Calu3 (cell line): ENCODE measurements at regions of chr17 and their contacts with region 1.

Region 1: DNA sequence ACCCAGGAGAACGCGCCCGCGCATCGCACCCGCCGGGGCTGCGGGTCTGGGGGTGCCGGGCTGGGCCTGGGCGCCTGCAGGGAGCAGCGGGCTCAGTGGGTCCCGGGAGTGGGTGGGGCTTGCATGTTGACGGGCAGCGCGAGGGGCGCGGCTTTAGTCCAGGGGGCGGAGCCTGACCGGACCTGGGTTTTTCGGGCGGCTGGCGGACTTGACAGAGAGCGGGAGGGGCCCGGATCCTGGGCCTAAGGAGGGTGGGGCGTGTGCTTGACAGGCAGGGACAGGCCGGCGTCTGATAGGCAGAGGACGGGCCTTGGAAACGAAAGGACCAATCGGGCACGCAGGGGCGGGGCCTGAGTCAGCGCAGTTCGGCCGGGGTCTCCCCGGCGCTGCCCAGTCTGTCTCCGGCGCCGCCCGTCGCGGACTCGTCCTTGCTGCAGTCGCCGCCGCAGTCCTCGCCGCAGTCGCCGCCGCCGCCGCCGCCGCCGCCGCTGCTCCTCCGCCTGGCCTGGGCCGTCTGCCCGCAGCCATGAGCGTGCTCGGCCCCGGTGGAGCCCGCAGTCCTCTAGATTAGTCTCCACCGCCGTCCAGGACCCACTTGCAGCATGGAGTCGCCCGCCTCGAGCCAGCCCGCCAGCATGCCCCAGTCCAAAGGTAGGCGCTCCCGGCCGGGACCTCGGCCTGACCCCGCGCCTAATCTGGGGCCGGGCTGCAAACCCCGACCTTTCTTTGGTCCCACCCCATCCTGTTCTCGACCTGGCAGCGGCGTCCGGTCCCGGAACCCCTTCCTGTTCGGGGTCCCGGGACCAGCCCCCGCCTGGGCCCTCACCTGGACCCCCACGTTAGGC is at the start of gene MAP2K3:
- DNase-seq: peak; percentile 96
- H3K4me3 Mint-ChIP-seq: peak within 1 kb of the TSS; percentile 89
- H3K27ac Mint-ChIP-seq: peak within 1 kb of the TSS; percentile 98
- H3K4me1 Mint-ChIP-seq: peaks cover 36% of the 10 kb centered on the region
- H3K27me3 Mint-ChIP-seq: no peaks in the 10 kb centered on the region
- CTCF ChIP-seq: no peak
- total RNA-seq, gene MAP2K3: 93.5 and 111 TPM in 2 replicates

Region 2: DNA sequence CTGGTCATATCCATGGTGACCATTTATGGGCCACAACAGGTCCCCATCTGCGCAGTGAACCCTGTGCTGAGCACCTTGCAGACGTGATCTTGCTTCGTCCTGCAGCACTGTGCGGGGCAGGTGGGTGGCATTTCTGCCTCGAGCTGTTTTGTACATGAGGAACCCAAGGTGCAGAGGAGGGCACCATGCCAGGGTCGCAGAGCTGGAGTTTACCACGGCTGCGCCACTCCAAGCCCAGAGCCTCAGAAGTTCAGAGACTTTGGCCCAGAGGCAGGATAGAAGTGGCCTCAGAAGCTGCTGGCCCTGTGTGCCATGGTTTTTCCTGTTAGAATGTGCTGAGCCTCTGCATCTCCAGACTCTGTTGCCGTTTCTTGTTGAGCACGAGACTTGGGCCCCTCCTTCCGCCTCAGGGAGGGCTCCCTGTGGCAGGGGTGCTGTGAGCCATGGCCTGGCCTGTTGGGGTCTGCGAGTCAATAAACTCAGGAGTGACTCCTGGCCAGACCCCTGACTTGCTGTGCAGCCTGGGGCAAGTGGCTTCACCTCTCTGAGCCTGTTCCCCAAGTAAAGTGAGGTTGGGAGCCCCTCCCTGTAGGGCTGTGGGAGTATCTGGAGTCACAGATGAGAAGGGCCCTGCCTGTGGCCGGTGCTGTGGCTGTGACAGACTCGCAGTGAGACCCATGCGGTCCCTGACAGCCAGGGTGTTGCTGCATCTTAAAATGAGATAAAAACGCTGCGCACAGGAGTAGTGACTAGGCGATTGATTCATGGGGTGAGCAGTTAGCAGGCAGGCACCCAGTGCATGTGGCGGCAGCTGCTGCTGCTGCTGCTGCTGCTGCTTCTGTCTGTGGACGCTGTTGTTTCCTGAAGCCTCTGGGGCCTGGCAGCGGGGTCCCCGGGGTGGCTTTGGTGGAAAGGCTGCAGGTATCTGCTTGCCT is 11.8 kb after region 1 on chr17:
- CTCF ChIA-PET with region 1: no interaction called
- intact Hi-C with region 1: no loop called
- DNase-seq: no peak
- H3K4me3 Mint-ChIP-seq: no peak overlapping the region
- H3K27ac Mint-ChIP-seq: no peak overlapping the region
- H3K4me1 Mint-ChIP-seq: no peaks in the 10 kb centered on the region
- H3K27me3 Mint-ChIP-seq: no peaks in the 10 kb centered on the region
- CTCF ChIP-seq: no peak

Region 3: GRCh38 chr17:21451975-21452374 is 167.4 kb after region 1 on chr17:
- CTCF ChIA-PET with region 1: interaction called, 7 read pairs
- intact Hi-C with region 1: loop called (anchors 1 kb)
- DNase-seq: no peak
- H3K4me3 Mint-ChIP-seq: no peak overlapping the region
- H3K27ac Mint-ChIP-seq: no peak overlapping the region
- H3K4me1 Mint-ChIP-seq: no peaks in the 10 kb centered on the region
- H3K27me3 Mint-ChIP-seq: peaks cover 31% of the 10 kb centered on the region
- CTCF ChIP-seq: no peak

Region 4: DNA sequence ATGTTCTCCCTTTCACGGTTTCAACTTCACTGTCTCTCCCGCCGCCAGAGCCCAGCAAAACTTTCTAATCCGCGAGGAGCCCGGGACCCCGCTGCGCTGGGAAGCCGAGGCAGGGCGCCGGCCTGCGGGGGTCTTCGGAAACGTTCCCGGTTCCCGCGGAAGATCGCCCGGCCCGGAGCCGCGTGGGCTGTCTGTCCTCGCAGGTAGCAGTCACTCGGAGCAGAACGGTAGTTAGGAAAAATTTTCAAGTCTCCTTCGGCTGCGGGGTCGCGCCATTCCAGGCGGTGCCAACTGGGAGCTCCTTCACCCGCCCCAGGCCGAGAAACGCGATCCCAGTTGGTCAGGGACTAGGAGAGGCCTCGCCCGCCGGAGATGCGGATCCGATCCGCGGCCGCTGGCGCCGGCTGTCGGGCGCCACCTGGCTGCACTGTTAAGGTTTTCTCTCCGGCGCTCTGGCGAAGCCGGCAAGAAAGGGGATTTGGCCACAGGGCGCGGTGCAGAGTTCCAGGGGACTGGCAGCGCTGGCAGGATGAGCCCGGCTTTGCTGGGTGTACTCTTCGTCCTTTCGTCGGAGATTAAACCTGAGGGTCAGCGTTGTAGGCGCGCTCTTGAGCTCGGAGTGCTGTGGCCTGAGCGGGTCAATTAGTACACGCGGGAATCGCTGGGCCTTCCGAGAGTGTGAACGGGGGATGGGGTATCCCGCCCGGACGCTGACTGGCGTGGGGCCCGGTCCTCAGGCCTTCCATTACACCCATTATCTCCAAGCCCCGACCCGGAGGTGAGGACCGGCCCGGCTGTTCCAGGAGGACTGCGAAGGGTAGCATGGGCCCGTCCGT is 227.0 kb after region 1 on chr17:
- CTCF ChIA-PET with region 1: interaction called, 7 read pairs
- intact Hi-C with region 1: loop called (anchors 10 kb)
- DNase-seq: peak; percentile 74
- H3K4me3 Mint-ChIP-seq: peak overlapping the region; percentile 64
- H3K27ac Mint-ChIP-seq: no peak overlapping the region
- H3K4me1 Mint-ChIP-seq: peaks cover 8% of the 10 kb centered on the region
- H3K27me3 Mint-ChIP-seq: peaks cover 75% of the 10 kb centered on the region
- CTCF ChIP-seq: peak; percentile 48